ENCODE measurements at regions of chr9 and their contacts with region 1.

Region 1: GRCh38 chr9:22037954-22038690 is 29.0 kb upstream of the CDKN2B start:
- DNase-seq: peak in 1 of 35 experiments; percentile 50
- ATAC-seq: peak in 2 of 4 experiments; percentile 55 to 58
- H3K4me3 ChIP-seq: no peak overlapping the region
- H3K4me3 Mint-ChIP-seq: no peak overlapping the region
- H3K27ac ChIP-seq: no peak overlapping the region
- H3K27ac Mint-ChIP-seq: no peak overlapping the region
- H3K4me1 ChIP-seq: no peaks in the 10 kb centered on the region
- H3K4me1 Mint-ChIP-seq: peaks cover 0 to 28% (median 19%) of the 10 kb centered on the region in 3 donors
- H3K27me3 ChIP-seq: no peaks in the 10 kb centered on the region
- H3K27me3 Mint-ChIP-seq: peaks cover 0 to 1% of the 10 kb centered on the region in 2 donors

Region 2: DNA sequence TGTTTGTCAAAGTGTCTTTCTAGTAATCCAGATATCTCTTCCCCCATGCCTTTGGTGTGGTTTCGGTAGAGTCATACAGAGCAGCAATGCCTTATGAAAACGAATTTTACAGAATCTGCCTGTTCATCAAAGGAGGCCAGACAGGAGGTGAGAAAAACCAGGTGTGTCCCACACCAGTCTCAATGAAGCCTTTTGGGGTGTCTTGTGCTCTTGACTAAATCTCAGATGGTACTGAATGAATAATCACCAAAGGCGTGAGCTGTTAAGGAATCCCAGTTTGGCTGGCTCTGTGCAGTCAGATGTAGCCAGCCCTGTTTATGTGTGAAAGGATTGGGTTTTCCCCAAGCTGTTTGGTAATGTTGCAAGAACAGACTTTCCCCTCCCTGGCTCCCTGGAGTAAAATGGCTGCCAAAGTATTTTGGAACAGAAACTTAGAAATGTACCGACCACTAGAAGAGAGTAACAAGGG is 41.8 kb after region 1 on chr9:
- CTCF ChIA-PET with region 1: no interaction called
- POLR2A ChIA-PET with region 1: no interaction called
- DNase-seq: peak in 17 of 35 experiments; percentile 0 to 51 (median 7)
- ATAC-seq: peak; percentile 84 to 94 (median 92)
- H3K4me3 ChIP-seq: no peak overlapping the region
- H3K4me3 Mint-ChIP-seq: peak overlapping the region in 2 of 3 donors; percentile 1 to 5
- H3K27ac ChIP-seq: no peak overlapping the region
- H3K27ac Mint-ChIP-seq: peak overlapping the region in 1 of 2 donors; percentile 57
- H3K4me1 ChIP-seq: peaks cover 19 to 23% of the 10 kb centered on the region in 2 experiments
- H3K4me1 Mint-ChIP-seq: peaks cover 27 to 49% (median 47%) of the 10 kb centered on the region in 3 donors
- H3K27me3 ChIP-seq: peaks cover 0 to 2% of the 10 kb centered on the region in 2 experiments
- H3K27me3 Mint-ChIP-seq: peaks cover 2 to 12% of the 10 kb centered on the region in 2 donors

Region 3: GRCh38 chr9:22119537-22120158 is 81.5 kb after region 1 on chr9:
- CTCF ChIA-PET with region 1: interaction called in 1 of 2 experiments, 10 read pairs
- POLR2A ChIA-PET with region 1: no interaction called
- DNase-seq: peak in 4 of 35 experiments; percentile 1 to 39 (median 2)
- ATAC-seq: peak in 3 of 4 experiments; percentile 52 to 74 (median 56)
- H3K4me3 ChIP-seq: no peak overlapping the region
- H3K4me3 Mint-ChIP-seq: no peak overlapping the region
- H3K27ac ChIP-seq: no peak overlapping the region
- H3K27ac Mint-ChIP-seq: no peak overlapping the region
- H3K4me1 ChIP-seq: no peaks in the 10 kb centered on the region
- H3K4me1 Mint-ChIP-seq: peaks cover 0 to 21% (median 14%) of the 10 kb centered on the region in 3 donors
- H3K27me3 ChIP-seq: peaks cover 0 to 2% of the 10 kb centered on the region in 2 experiments
- H3K27me3 Mint-ChIP-seq: peaks cover 5 to 6% of the 10 kb centered on the region in 2 donors

Region 4: DNA sequence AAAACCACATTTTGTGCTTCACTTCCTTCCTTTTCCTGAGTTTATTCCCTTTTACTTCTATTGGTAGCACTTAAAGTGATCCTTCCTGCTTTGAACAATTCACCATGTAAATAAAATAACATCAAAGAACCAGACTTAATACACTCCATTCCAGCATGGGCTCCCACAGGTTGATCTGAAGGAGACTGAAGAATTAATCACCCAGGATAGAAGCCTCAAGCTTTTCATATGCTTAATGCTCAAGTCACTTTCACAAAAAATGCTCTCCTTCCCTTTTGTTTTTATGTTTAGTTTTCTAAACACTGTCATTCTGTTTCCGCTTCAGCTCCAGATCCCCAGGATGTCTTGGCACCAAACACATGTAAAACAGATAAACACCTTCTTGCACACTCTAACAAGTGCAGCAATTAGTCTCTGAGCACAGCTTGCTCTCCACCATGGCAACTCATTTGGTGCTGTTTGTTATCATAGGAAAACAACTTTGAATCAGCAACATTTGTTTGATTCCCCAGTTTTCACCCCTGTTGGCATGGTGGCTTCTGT is 445.5 kb after region 1 on chr9:
- CTCF ChIA-PET with region 1: no interaction called
- POLR2A ChIA-PET with region 1: no interaction called
- DNase-seq: no peak
- ATAC-seq: no peak
- H3K4me3 ChIP-seq: no peak overlapping the region
- H3K4me3 Mint-ChIP-seq: no peak overlapping the region
- H3K27ac ChIP-seq: no peak overlapping the region
- H3K27ac Mint-ChIP-seq: no peak overlapping the region
- H3K4me1 ChIP-seq: no peaks in the 10 kb centered on the region
- H3K4me1 Mint-ChIP-seq: no peaks in the 10 kb centered on the region
- H3K27me3 ChIP-seq: no peaks in the 10 kb centered on the region
- H3K27me3 Mint-ChIP-seq: peaks cover 2 to 6% of the 10 kb centered on the region in 2 donors

Measured in T-cell (primary cell).